ENCODE measurements at regions of chrX and their contacts with region 1.

Region 1: DNA sequence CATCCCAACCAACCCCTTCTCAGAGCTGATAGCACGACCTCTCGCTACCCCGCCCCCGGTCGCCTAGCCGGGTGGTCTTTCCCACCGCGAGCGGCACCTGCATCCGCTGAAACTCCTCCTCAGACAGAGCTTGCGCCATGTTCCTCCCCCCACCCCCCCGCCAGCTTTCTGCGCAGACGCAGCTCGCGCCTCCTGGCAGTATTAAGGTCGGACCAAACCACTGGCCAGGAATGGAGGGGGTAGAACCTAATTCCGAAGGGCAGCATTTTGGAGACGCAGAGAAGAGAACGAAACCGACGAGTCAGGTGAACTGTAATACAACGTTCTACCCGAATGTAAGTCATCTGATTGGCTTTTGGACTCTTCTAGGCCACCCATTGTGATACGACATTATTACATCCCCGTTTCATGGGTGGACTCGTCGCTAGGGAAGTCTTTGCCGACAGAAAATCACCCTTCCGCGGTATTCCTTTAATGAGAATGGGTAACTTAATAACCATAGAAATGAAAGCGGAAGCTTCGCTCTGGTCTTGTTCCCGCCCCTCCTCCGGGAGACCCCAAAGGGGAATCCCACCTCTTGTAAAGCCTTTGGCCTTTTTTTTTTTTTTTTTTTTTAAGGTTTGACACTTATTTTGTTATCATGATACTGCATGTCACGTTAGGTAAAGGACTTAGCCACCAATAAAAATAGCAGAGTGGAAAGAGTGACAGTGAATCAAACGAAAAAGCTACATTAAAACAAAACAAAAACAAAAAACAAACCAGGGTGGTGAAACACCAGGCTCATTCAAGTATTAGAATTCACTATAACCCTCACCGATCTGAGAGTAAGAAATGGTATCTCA is at the start of gene GRIPAP1:
- DNase-seq: peak in 9 of 10 donors; percentile 18 to 90 (median 46)

Region 2: GRCh38 chrX:49043220-49043986 is 41.1 kb after region 1 on chrX and contains the start of gene TFE3:
- intact Hi-C with region 1: loop called (anchors 1 kb)
- DNase-seq: peak; percentile 91 to 99 (median 94)

Measured in posterior cingulate gyrus (tissue), 11 donors.